ENCODE measurements at regions of chr14 and their contacts with region 1.

Region 1: DNA sequence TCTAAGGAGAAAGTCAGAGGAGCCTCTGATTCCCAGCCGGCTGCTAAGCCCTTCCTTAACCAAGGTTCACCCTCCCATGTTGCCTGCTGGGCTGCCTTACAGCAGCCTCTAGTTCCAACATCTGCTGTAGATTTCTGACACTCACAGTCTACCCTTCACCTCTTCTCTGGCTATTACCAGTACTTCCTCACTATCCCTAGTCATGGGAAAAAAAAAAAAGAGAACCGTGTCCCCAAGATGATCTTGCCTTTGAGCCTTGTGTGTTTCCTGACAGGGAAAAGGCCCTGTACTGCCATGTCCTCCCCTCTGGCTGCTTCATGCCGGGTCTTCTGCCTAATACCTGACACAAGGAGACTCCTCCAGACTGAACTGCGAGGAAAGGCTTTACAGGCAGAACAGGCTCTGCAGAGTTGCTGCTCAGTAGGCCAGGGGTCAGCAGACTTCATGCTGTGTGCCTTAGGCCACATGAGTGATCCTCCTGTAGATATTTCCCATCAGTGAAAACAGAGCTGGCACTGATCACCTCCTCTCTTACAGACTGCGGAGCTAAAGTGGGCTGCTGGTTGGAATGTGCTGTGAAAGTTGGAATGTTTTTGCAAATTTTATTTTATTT is 46.8 kb downstream of the PRKCH start:
- DNase-seq: no peak
- ATAC-seq: no peak
- H3K4me3 Mint-ChIP-seq: peak overlapping the region; percentile 29
- H3K27ac Mint-ChIP-seq: no peak overlapping the region
- H3K4me1 Mint-ChIP-seq: peaks cover 32% of the 10 kb centered on the region
- H3K27me3 Mint-ChIP-seq: no peaks in the 10 kb centered on the region
- CTCF ChIP-seq: no peak

Region 2: DNA sequence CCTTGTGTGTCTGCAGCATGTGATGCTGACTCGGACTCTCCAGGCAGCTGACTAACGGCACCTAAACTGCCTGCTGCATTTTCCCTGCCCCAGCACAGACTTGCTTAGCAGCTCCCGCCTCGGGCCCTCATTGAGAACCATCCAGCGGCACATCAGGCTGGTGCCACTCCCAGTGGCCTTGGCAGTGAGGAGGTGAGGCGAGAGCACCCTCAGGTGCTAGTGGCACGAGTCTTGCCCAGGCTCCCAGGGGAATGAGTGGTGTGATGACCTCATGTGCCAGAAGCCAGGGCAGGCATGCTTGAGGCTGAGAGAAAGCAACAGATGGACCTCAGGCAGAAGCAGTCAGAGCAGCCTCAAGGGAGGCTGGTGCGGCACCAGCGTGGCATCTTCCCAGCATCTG is 13.3 kb after region 1 on chr14:
- CTCF ChIA-PET with region 1: interaction called, 10 read pairs
- POLR2A ChIA-PET with region 1: interaction called, 39 read pairs
- intact Hi-C with region 1: loop called (anchors 2 kb)
- DNase-seq: peak; percentile 37
- ATAC-seq: no peak
- H3K4me3 Mint-ChIP-seq: peak overlapping the region; percentile 54
- H3K27ac Mint-ChIP-seq: peak overlapping the region; percentile 83
- H3K4me1 Mint-ChIP-seq: peaks cover 64% of the 10 kb centered on the region
- H3K27me3 Mint-ChIP-seq: no peaks in the 10 kb centered on the region
- CTCF ChIP-seq: no peak

Measured in activated CD8-positive, alpha-beta T cell treated with anti-CD3 and anti-CD28 coated beads for 36 hours (primary cell).